ENCODE measurements at regions of chr19 and their contacts with region 1.

Region 1: DNA sequence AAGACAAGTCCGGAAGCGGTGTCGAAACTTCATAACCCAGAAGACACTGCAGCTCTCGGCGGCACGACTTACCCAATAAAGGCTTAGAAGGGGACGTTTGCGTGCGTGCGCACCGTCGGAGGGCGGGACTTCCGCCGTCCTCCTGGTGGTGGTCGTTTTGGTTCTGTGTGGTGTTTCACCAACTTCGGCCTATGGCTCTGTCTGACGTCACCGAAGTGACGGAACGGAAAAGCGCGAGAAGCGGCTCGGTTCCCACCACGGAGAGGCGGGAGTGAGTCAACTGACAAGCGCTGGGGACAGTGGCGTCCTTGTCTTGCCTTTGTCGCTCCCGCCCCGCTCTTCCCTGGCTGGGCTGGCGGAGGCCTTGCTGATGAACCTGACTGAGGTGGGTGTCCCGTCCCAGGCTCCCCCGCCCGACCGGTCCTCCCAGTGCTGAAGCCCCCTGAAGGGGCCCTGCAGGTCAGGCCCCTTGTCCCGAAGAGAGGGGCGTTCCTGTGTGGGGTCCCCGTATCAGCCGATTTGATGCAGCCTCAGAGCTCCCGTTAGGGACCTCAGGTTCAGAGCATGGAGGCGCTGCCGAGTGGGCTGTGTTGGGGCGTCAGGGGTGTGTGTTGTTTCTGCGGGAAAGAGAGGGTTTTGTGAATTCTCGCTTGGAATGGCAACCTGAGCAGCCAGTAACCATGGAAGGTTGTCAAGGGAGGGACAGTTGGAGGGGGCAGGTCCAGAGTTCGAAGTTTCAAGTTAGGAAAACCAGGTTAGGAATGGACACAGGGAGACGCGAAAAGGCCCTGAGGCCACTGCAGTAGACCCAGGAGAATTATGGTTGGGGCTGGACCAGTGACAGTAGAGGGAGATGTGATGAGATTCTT is at the start of gene ZNF548:
- DNase-seq: peak; percentile 99
- H3K4me3 ChIP-seq: peak within 1 kb of the TSS; percentile 13 to 78 (median 73)
- H3K27ac ChIP-seq: peak within 1 kb of the TSS; percentile 55
- H3K4me1 ChIP-seq: peaks cover 10% of the 10 kb centered on the region
- H3K27me3 ChIP-seq: no peaks in the 10 kb centered on the region
- CTCF ChIP-seq: peak in 1 of 2 donors; percentile 31
- POLR2A ChIP-seq: no peak
- total RNA-seq, gene ZNF548: 7.8 and 8.8 TPM in 2 replicates

Region 2: GRCh38 chr19:57191141-57192076 is 198.6 kb before region 1 on chr19 and contains the start of gene ZNF264:
- CTCF ChIA-PET with region 1: no interaction called
- POLR2A ChIA-PET with region 1: no interaction called
- dilution Hi-C with region 1: loop called (anchors 10 kb)
- intact Hi-C with region 1: no loop called
- DNase-seq: peak; percentile 90
- H3K4me3 ChIP-seq: peak within 1 kb of the TSS; percentile 22 to 80 (median 77)
- H3K27ac ChIP-seq: peak within 1 kb of the TSS; percentile 40
- H3K4me1 ChIP-seq: peaks cover 3% of the 10 kb centered on the region
- H3K27me3 ChIP-seq: no peaks in the 10 kb centered on the region
- CTCF ChIP-seq: no peak
- POLR2A ChIP-seq: peak; percentile 87
- total RNA-seq, gene ZNF264: 18.2 and 20.5 TPM in 2 replicates

Region 3: GRCh38 chr19:57320180-57321084 is 69.5 kb before region 1 on chr19 and contains the start of gene ZNF543:
- CTCF ChIA-PET with region 1: no interaction called
- POLR2A ChIA-PET with region 1: no interaction called
- dilution Hi-C with region 1: no loop called
- intact Hi-C with region 1: loop called (anchors 1 kb)
- DNase-seq: peak; percentile 96
- H3K4me3 ChIP-seq: peak within 1 kb of the TSS; percentile 52 to 70 (median 65)
- H3K27ac ChIP-seq: peak within 1 kb of the TSS; percentile 72
- H3K4me1 ChIP-seq: peaks cover 6% of the 10 kb centered on the region
- H3K27me3 ChIP-seq: peaks cover 13 to 24% of the 10 kb centered on the region in 2 experiments
- CTCF ChIP-seq: no peak
- POLR2A ChIP-seq: peak; percentile 79
- total RNA-seq, gene ZNF543: 4.5 and 5.3 TPM in 2 replicates

Region 4: GRCh38 chr19:57362997-57363705 is 26.8 kb before region 1 on chr19 and contains the starts of genes TRAPPC2B and ZNF547:
- CTCF ChIA-PET with region 1: interaction called, 5 read pairs
- POLR2A ChIA-PET with region 1: no interaction called
- dilution Hi-C with region 1: no loop called
- intact Hi-C with region 1: loop called (anchors 1 kb)
- DNase-seq: peak; percentile 100
- H3K4me3 ChIP-seq: peak within 1 kb of the TSS; percentile 47 to 92 (median 74)
- H3K27ac ChIP-seq: peak within 1 kb of the TSS; percentile 27
- H3K4me1 ChIP-seq: peaks cover 8% of the 10 kb centered on the region
- H3K27me3 ChIP-seq: no peaks in the 10 kb centered on the region
- CTCF ChIP-seq: no peak
- POLR2A ChIP-seq: peak; percentile 70
- total RNA-seq, gene TRAPPC2B: 6.3 and 7.5 TPM in 2 replicates
- total RNA-seq, gene ZNF547: 2.7 and 3.2 TPM in 2 replicates

Region 5: DNA sequence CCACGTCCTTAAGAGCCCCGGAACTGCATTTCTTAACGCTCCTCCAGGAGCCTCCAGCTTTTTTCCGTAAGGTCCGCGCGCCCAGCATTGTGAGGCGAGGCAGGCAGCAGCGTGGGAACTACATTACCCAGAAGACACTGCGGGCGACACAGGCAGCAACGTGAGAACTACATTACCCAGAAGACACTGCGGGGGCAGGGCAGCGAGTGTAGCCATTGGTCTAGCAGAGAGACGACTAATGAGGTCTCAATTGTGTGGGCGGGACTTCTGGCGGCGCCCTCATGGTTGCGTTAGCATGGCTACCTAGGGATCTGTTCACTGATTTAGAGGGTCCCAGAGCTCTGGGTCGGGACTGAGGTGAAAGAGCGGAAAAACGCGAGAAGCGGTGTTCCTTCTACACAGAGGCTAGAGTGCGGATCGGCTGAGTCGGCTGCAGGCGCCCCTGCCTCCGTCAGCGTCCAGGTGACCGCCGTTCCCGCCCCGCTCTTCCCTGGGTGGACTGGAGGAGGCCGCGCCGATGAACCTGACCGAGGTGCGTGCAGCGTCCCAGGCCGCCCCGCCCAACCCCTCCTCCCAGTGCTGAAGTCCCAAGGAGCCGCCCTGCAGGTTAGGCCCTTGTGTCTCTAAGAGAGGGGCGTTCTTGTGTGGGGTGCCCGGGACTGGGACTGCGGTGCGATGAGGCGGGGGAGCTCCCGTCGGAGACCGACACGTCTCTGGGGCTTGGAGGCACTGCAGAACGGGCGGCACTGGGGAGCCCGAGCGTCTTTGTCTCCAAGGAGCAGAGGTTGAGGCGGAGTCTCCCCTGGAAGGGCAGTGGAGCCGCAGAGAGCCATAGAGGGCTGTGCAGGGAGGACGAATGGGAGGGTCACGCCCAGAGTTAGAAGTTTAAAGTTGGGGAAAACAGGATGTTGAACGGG is 45.4 kb after region 1 on chr19 and contains the start of gene ZNF749:
- CTCF ChIA-PET with region 1: no interaction called
- POLR2A ChIA-PET with region 1: no interaction called
- dilution Hi-C with region 1: no loop called
- intact Hi-C with region 1: loop called (anchors 1 kb)
- DNase-seq: peak; percentile 98
- H3K4me3 ChIP-seq: peak within 1 kb of the TSS; percentile 58 to 81 (median 68)
- H3K27ac ChIP-seq: no peak within 1 kb of the TSS
- H3K4me1 ChIP-seq: peaks cover 10% of the 10 kb centered on the region
- H3K27me3 ChIP-seq: no peaks in the 10 kb centered on the region
- CTCF ChIP-seq: no peak
- POLR2A ChIP-seq: peak; percentile 14
- total RNA-seq, gene ZNF749: 8.9 and 11.5 TPM in 2 replicates

Region 6: GRCh38 chr19:57537953-57538547 is 148.1 kb after region 1 on chr19:
- CTCF ChIA-PET with region 1: no interaction called
- POLR2A ChIA-PET with region 1: no interaction called
- dilution Hi-C with region 1: no loop called
- intact Hi-C with region 1: no loop called
- DNase-seq: no peak
- H3K4me3 ChIP-seq: no peak overlapping the region
- H3K27ac ChIP-seq: no peak overlapping the region
- H3K4me1 ChIP-seq: no peaks in the 10 kb centered on the region
- H3K27me3 ChIP-seq: no peaks in the 10 kb centered on the region
- CTCF ChIP-seq: no peak
- POLR2A ChIP-seq: no peak